PC-9 (cell line): ENCODE measurements at regions of chr15 and their contacts with region 1.

Region 1: GRCh38 chr15:63389902-63390670 is 8.4 kb upstream of the CA12 start:
- DNase-seq: peak; percentile 72 to 76
- H3K4me3 ChIP-seq: no peak overlapping the region
- H3K27ac ChIP-seq: no peak overlapping the region
- H3K4me1 ChIP-seq: 0 out of 2 replicates have a peak, but pooled peaks cover 10% of the 10 kb centered on the region
- H3K27me3 ChIP-seq: no peaks in the 10 kb centered on the region
- CTCF ChIP-seq: no peak

Region 2: GRCh38 chr15:63246691-63247464 is 143.2 kb before region 1 on chr15:
- CTCF ChIA-PET with region 1: no interaction called
- POLR2A ChIA-PET with region 1: no interaction called
- intact Hi-C with region 1: no loop called
- DNase-seq: peak in 1 of 2 experiments; percentile 87
- H3K4me3 ChIP-seq: no peak overlapping the region
- H3K27ac ChIP-seq: peak overlapping the region; percentile 36; the same call in 1 of the 2 replicates
- H3K4me1 ChIP-seq: peaks cover 14% of the 10 kb centered on the region
- H3K27me3 ChIP-seq: no peaks in the 10 kb centered on the region
- CTCF ChIP-seq: no peak

Region 3: GRCh38 chr15:63348392-63348791 is 41.7 kb before region 1 on chr15:
- CTCF ChIA-PET with region 1: no interaction called
- POLR2A ChIA-PET with region 1: no interaction called
- intact Hi-C with region 1: loop called (anchors 10 kb)
- DNase-seq: peak; percentile 39 to 44
- H3K4me3 ChIP-seq: no peak overlapping the region
- H3K27ac ChIP-seq: peak overlapping the region; percentile 14; the same call in 1 of the 2 replicates
- H3K4me1 ChIP-seq: peaks cover 14% of the 10 kb centered on the region
- H3K27me3 ChIP-seq: no peaks in the 10 kb centered on the region
- CTCF ChIP-seq: no peak

Region 4: DNA sequence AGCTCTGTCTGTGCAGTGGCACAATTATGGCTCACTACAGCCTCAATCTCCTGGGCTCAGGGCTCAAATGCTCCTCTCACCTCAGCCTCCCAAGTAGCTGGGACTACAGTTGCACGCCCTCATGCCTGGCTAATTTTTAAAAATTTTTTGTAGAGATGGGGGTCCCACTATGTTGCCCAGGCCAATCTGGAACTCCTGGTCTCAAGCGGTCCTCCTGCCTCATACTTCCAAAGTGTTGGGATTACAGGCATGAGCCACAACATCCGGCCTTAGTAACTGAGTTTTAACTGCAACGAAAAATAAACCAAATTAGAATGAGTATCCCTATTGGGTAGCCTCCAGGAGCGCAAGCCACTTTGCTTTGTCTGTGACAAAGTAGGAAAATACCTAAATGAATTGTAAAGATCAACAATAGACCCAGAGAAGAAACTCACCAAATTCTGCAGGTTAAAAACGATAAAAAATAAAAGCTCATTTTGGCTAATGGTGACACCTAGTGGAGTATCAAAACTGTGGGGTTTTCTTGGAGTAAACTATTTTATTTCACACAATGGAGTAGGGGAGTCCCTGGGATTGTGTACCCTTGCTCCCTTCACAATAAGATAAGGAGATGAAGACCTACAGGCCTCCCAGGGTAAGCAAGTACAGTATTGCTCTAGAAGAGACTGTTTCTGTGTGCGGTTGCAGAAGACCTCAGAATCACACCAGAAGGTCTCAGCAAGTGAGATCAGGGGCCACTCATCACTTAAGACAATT is 12.6 kb after region 1 on chr15:
- CTCF ChIA-PET with region 1: no interaction called
- POLR2A ChIA-PET with region 1: interaction called, 11 read pairs
- intact Hi-C with region 1: no loop called
- DNase-seq: no peak
- H3K4me3 ChIP-seq: no peak overlapping the region
- H3K27ac ChIP-seq: no peak overlapping the region
- H3K4me1 ChIP-seq: no peaks in the 10 kb centered on the region
- H3K27me3 ChIP-seq: no peaks in the 10 kb centered on the region
- CTCF ChIP-seq: peak; percentile 70